ENCODE measurements at regions of chr3 and their contacts with region 1.

Region 1: DNA sequence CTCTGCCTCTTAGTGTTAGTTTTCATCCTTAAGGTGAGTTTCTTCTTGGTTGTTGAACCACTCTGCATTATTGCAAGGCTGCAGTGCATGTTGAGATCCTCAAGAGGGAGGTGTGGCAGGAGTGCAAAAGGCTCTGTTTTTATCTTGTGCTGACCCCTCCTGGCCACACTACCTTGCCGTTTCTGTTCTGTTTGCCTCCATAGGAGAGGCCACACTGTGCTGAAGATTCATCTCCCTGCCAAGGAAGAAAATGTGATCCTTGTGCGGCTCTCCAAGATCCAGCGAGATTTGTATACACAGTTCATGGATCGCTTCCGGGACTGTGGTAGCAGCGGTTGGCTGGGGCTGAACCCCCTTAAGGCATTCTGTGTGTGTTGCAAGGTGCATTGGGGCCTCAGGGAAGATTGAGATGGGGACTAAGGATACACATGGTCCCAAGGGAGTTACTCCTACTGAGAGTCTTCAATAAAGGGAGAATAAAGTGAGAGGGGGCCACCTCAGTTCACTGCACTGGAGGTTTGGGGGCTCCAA is 33.0 kb upstream of the TEX264 start:
- DNase-seq: no peak
- ATAC-seq: peak in 2 of 4 donors; percentile 46 to 49
- H3K4me3 ChIP-seq: no peak overlapping the region
- H3K27ac ChIP-seq: no peak overlapping the region
- H3K4me1 ChIP-seq: no peaks in the 10 kb centered on the region
- H3K27me3 ChIP-seq: no peaks in the 10 kb centered on the region
- CTCF ChIP-seq: peak in 11 of 12 donors; percentile 13 to 53 (median 37)
- POLR2A ChIP-seq: no peak

Region 2: GRCh38 chr3:51445544-51446280 is 192.3 kb before region 1 on chr3:
- intact Hi-C with region 1: no loop called
- DNase-seq: no peak
- ATAC-seq: no peak
- H3K4me3 ChIP-seq: no peak overlapping the region
- H3K27ac ChIP-seq: no peak overlapping the region
- H3K4me1 ChIP-seq: peaks cover 0 to 4% (median 0%) of the 10 kb centered on the region in 12 donors
- H3K27me3 ChIP-seq: no peaks in the 10 kb centered on the region
- CTCF ChIP-seq: no peak
- POLR2A ChIP-seq: no peak

Region 3: DNA sequence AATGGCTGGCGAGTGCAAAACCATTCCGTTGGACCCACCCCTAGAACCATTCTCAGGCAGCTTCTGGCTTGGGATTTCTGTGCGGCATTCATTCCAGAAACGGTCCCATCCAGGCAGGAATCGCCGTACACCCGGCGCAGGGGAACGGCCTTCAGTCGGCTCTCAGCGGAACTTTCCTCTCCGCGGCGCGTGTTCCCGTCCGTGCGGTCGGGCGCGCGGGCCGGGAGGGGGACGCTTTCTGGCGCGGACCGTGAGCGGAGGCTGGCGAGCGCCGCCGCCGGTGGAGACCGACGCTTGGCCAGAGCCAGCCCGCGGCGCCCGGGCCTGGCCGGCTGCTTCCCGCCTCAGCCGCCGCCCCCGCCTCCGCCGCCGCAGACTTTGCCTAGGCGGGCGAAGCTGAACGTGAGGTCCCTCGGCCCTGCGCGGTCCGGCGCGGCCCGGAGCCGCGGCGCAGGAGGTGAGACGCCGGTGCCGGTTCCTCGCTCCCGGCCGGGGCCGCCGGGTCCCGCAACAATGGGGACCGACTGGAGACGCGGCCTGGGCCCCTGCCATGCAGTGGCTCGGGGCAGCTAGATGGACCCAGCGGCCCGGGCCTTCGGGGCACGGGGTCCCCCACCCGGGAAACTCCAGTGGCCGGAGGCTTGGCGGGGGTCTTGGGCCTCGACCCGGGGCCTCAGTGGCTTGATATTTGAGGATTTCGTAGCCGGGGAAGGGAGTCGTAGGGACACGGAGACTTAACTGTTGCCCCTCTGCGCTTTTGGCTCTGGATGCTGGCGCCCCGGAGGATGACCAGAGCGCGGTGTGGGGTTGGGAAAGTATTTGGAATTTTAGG is 99.3 kb before region 1 on chr3 and contains the start of gene RAD54L2:
- intact Hi-C with region 1: loop called in 1 of 10 experiments (anchors 10 kb)
- DNase-seq: peak; percentile 85 to 93 (median 88)
- ATAC-seq: peak; percentile 93 to 98 (median 98)
- H3K4me3 ChIP-seq: peak within 1 kb of the TSS; percentile 77 to 100 (median 96)
- H3K27ac ChIP-seq: peak within 1 kb of the TSS; percentile 74 to 95 (median 88)
- H3K4me1 ChIP-seq: peaks cover 0 to 36% (median 18%) of the 10 kb centered on the region in 12 donors
- H3K27me3 ChIP-seq: no peaks in the 10 kb centered on the region
- CTCF ChIP-seq: peak in 7 of 12 donors; percentile 31 to 58 (median 34)
- POLR2A ChIP-seq: peak in 1 of 2 donors; percentile 63
- total RNA-seq, gene RAD54L2: 10.1 to 20.0 (median 13.3) TPM

Region 4: GRCh38 chr3:51550047-51550819 is 87.8 kb before region 1 on chr3:
- intact Hi-C with region 1: no loop called
- DNase-seq: no peak
- ATAC-seq: no peak
- H3K4me3 ChIP-seq: no peak overlapping the region
- H3K27ac ChIP-seq: no peak overlapping the region
- H3K4me1 ChIP-seq: no peaks in the 10 kb centered on the region
- H3K27me3 ChIP-seq: no peaks in the 10 kb centered on the region
- CTCF ChIP-seq: no peak
- POLR2A ChIP-seq: no peak

Region 5: GRCh38 chr3:51622868-51623267 is 15.1 kb before region 1 on chr3:
- intact Hi-C with region 1: no loop called
- DNase-seq: peak in 1 of 5 donors; percentile 37
- ATAC-seq: peak in 1 of 4 donors; percentile 35
- H3K4me3 ChIP-seq: no peak overlapping the region
- H3K27ac ChIP-seq: peak overlapping the region in 1 of 12 donors; percentile 75
- H3K4me1 ChIP-seq: peaks cover 0 to 31% (median 15%) of the 10 kb centered on the region in 12 donors
- H3K27me3 ChIP-seq: no peaks in the 10 kb centered on the region
- CTCF ChIP-seq: no peak
- POLR2A ChIP-seq: no peak

Region 6: DNA sequence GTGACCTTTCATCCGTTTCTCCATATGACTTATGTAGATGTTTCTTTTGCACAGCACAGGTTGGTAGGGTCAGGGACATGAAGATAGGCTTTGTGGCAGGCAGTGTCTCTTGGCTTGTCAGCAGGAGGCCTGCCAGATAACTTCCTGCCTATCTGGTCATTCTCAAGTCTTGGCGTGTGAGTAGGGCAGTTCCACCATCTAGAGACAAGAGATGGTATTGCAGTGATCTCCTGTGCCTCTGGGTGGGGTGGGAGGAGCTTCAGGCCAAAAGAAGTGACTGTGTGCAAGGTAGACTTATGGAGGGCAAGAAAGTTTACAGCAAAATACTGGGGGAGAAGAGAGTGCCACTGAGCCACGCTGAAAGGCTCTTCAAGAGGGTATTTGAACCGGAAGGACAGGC is 44.1 kb after region 1 on chr3:
- intact Hi-C with region 1: loop called in 2 of 10 experiments (anchors 5 kb)
- DNase-seq: peak; percentile 25 to 81 (median 78)
- ATAC-seq: peak; percentile 71 to 76 (median 72)
- H3K4me3 ChIP-seq: peak overlapping the region in 1 of 12 donors; percentile 17
- H3K27ac ChIP-seq: peak overlapping the region in 10 of 12 donors; percentile 27 to 92 (median 58)
- H3K4me1 ChIP-seq: peaks cover 22 to 93% (median 79%) of the 10 kb centered on the region in 12 donors
- H3K27me3 ChIP-seq: no peaks in the 10 kb centered on the region
- CTCF ChIP-seq: peak; percentile 70 to 83 (median 79)
- POLR2A ChIP-seq: no peak

Region 7: GRCh38 chr3:51706788-51707731 is 69.1 kb after region 1 on chr3 and contains the start of gene GRM2:
- intact Hi-C with region 1: no loop called
- DNase-seq: peak; percentile 79 to 88 (median 83)
- ATAC-seq: peak; percentile 83 to 93 (median 88)
- H3K4me3 ChIP-seq: peak within 1 kb of the TSS in 10 of 12 donors; percentile 22 to 53 (median 39)
- H3K27ac ChIP-seq: no peak within 1 kb of the TSS
- H3K4me1 ChIP-seq: peaks cover 0 to 17% (median 2%) of the 10 kb centered on the region in 12 donors
- H3K27me3 ChIP-seq: no peaks in the 10 kb centered on the region
- CTCF ChIP-seq: peak in 3 of 12 donors; percentile 14 to 35 (median 27)
- POLR2A ChIP-seq: no peak
- total RNA-seq, gene GRM2: 0.21 to 0.95 (median 0.56) TPM in 7 of 9 donors, not detected in the others

Region 8: DNA sequence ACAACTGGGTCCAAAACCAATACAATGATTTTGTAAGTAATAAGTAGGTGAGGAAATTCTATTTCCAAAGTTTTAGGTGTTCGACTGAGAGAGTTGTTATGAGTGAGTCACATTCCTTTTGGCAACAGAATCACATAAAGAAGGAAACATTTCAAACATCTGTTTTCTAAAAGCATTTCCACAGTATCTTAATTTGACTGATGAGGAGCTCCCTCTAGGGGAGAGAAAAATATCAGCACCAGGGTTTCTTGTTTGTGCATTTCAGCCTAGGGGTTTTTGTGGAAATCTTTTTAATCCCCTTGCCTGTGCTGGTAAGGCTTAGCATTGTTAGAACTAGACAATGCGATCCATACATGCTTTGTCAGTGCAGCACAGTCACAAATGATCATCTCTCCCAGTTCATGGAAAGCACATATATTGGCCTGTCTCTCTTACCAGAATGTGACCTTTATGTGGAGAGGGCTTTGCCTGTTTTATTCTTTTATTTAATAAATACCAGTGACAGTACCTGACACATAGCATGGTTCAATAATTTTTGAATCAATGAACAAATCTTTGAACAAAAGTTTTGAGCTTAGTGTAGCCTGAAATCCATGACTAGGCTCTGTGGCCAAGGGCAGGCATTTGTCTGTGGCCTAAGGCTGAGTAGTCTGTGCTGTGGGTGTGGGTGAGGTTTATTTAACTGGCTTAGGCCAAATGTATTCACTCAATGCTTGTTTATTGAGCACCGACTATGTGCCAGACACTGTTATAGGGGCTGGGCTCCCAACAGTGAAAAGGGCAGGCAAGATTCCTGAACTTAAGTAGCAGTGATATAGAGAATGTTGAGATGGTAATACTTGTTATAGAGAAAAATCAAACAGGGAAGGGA is 162.1 kb after region 1 on chr3:
- intact Hi-C with region 1: loop called in 1 of 10 experiments (anchors 5 kb)
- DNase-seq: no peak
- ATAC-seq: peak in 2 of 4 donors; percentile 38 to 57
- H3K4me3 ChIP-seq: no peak overlapping the region
- H3K27ac ChIP-seq: no peak overlapping the region
- H3K4me1 ChIP-seq: no peaks in the 10 kb centered on the region
- H3K27me3 ChIP-seq: peaks cover 0 to 34% (median 0%) of the 10 kb centered on the region in 9 donors
- CTCF ChIP-seq: peak; percentile 69 to 92 (median 81)
- POLR2A ChIP-seq: no peak

Measured in heart left ventricle (tissue), 16 donors.